Activated T-helper 1 cell treated with anti-CD3 and anti-CD28 coated beads, Interleukin-12 subunit alpha, Interleukin-12 subunit beta, Interleukin-2, Interleukin-4 antibody, amounts not matched to agents 30 ng/mL and 10 ng/mL and 1 ng/mL, durations not matched to agents 14 hours and 24 hours and 36 hours (primary cell): ENCODE measurements at regions of chr5 and their contacts with region 1.

Region 1: DNA sequence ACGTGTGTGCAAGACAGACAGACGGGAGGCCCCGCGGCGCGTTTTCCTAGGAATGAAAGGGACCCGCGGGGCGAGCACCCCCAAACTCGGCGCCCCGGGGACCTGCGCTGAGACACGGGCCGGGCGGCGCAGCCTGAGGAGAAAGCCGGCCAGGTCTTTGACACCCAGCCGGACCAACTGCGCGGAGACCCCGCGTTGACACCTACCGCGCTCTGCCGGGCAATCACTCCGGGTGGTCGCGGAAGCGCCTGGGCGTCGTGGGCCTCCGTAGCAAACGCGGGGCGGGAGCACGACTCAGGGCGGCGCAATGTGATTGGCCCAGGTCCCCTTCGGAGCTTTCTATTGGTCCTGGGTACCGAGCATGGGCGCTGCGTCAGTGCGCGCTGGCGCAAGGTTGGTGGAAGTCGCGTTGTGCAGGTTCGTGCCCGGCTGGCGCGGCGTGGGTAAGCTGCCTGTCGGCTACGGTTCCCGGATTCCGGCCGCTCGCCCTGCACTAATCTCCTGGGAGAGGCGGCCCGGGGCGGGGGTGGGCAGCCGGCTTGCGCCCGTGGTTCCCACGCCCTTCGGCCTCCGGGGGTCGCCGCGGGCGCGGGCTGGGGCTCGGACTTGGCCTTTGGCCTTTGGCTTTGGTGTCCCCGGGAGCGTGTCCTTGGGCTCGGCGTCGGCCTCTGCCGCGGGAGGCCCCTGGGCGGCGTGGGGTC is at the starts of genes FASTKD3 and MTRR:
- DNase-seq: peak; percentile 87
- H3K4me3 Mint-ChIP-seq: peak within 1 kb of the TSS; percentile 97
- H3K27ac Mint-ChIP-seq: peak within 1 kb of the TSS; percentile 89
- H3K4me1 Mint-ChIP-seq: peaks cover 73% of the 10 kb centered on the region
- H3K27me3 Mint-ChIP-seq: no peaks in the 10 kb centered on the region
- total RNA-seq, gene FASTKD3: 13.5 and 18.6 TPM in 2 replicates
- total RNA-seq, gene MTRR: 83.0 and 90.4 TPM in 2 replicates

Region 2: GRCh38 chr5:6632917-6633468 is 1235.9 kb before region 1 on chr5 and contains the starts of genes NSUN2 and SRD5A1:
- intact Hi-C with region 1: loop called (anchors 5 kb)
- DNase-seq: peak; percentile 90
- H3K4me3 Mint-ChIP-seq: peak within 1 kb of the TSS; percentile 98
- H3K27ac Mint-ChIP-seq: peak within 1 kb of the TSS; percentile 97
- H3K4me1 Mint-ChIP-seq: peaks cover 57% of the 10 kb centered on the region
- H3K27me3 Mint-ChIP-seq: no peaks in the 10 kb centered on the region
- total RNA-seq, gene NSUN2: 146 and 149 TPM in 2 replicates
- total RNA-seq, gene SRD5A1: 13.8 and 14.0 TPM in 2 replicates

Region 3: DNA sequence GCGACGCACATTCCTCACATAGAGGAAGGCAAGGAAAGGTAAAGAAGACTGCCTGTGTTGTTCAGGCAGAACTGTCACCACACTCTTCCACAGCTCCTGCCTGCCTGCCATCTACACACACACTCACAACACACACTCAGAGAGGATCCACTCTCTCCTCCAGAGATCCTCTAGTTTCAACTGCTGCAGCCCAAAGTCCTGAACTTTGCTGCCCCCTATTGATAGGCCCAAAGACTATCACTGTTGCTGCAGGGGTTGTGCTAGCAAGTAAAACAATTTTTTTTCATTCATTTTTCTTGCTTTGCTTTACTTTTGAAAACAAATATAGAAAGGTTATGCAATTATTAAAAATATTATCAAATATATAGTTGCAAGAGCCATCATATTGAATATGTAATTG is 12.1 kb before region 1 on chr5:
- intact Hi-C with region 1: loop called (anchors 1 kb)
- DNase-seq: no peak
- H3K4me3 Mint-ChIP-seq: no peak overlapping the region
- H3K27ac Mint-ChIP-seq: no peak overlapping the region
- H3K4me1 Mint-ChIP-seq: peaks cover 26% of the 10 kb centered on the region
- H3K27me3 Mint-ChIP-seq: no peaks in the 10 kb centered on the region

Region 4: GRCh38 chr5:7916171-7916804 is 47.4 kb after region 1 on chr5:
- intact Hi-C with region 1: no loop called
- DNase-seq: no peak
- H3K4me3 Mint-ChIP-seq: no peak overlapping the region
- H3K27ac Mint-ChIP-seq: no peak overlapping the region
- H3K4me1 Mint-ChIP-seq: no peaks in the 10 kb centered on the region
- H3K27me3 Mint-ChIP-seq: no peaks in the 10 kb centered on the region

Region 5: DNA sequence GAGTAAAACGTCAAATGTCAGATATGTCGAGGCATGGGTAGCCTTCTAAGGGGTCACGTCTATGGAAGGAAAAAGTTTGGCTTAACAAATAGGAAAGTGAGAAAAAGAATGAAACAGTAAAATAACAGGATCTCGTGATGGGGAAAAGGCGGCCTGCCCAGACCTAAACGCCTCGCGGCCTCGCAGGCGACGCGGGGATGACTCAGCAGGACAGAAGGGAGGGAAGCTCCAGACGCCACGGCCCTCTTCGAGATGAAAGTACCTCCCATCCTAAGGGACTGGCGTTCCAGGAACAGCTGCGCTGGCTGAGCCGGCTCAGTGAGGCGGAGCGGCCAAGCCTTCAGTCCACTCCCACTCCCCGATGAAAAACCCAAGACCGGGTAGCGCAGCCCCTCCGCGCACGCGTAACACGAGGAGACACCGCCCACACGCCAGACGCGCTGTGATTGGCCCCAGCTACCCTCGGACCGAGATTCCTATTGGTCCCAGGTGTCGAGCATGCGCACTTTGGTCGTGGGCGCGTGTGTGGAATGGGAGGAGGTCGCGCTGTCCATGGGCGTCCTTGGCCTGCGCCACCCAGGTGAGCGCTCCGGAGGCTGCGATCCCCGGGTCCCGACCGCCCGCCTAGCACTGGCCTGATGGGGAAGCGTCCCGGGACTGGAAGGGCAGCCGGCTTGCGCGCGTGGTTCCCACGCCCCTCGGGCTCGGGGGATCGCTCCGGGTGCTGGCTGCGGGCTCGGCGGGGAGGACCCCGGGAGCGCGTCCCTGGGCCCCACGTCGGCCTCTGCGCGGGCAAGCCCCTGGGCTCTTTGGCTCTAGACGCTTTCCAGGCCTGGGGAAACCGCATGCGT is 588.5 kb after region 1 on chr5:
- intact Hi-C with region 1: loop called (anchors 10 kb)
- DNase-seq: peak; percentile 75
- H3K4me3 Mint-ChIP-seq: peak overlapping the region; percentile 85
- H3K27ac Mint-ChIP-seq: peak overlapping the region; percentile 59
- H3K4me1 Mint-ChIP-seq: peaks cover 6% of the 10 kb centered on the region
- H3K27me3 Mint-ChIP-seq: no peaks in the 10 kb centered on the region